ENCODE measurements at regions of chr5 and their contacts with region 1.

Region 1: DNA sequence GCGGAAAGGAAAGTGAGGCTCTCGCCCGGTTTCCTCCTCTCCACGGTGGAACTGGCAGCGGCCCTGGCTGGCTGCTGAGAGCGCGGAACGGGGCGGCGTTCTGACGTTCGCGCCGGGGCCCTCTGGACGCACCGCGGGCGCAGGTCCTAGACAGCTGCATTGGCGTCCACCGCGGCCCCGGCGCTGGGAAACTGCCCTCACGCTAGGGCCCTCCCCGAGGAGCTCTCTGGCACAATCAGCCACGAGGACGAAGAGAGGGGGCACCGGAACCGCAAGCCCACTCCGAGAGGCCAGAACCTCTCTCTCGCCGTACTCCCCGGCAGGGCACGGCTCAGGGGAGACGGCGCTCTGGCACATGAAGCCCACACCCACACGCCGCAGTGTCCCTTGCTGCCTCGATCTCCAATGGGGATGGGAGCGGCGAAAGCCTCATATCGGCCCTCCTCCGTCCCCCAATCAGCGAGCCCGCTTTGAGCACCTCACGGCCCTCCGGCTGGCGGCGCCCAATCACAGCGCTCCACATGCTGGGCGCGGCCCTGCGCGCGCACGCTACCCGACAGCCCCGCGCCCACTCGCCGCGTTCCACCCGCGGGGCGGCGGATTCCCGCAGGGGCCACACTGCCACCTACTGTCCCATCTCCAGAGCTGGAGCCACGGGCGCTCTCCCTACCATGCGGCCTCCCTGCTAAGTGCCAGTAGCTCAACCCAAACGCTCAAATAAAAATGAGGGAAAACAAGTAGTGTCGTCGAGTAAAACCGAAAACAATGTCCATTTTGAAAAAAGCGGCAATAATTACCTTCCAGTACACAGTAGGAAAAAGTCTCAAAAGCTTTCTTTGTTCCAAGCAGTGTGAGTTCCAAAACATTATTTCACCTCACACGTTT is 11.8 kb downstream of the MRPS27 start:
- DNase-seq: peak; percentile 98
- ATAC-seq: peak; percentile 93
- H3K4me3 ChIP-seq: peak overlapping the region; percentile 77 to 93 (median 86)
- H3K4me3 Mint-ChIP-seq: peak overlapping the region; percentile 96
- H3K27ac ChIP-seq: peak overlapping the region; percentile 95 to 96
- H3K27ac Mint-ChIP-seq: peak overlapping the region; percentile 99
- H3K4me1 ChIP-seq: peaks cover 12 to 29% of the 10 kb centered on the region in 2 donors
- H3K4me1 Mint-ChIP-seq: peaks cover 38% of the 10 kb centered on the region
- H3K27me3 ChIP-seq: no peaks in the 10 kb centered on the region
- H3K27me3 Mint-ChIP-seq: no peaks in the 10 kb centered on the region
- CTCF ChIP-seq: peak; percentile 89

Region 2: GRCh38 chr5:71586941-71587765 is 721.1 kb before region 1 on chr5 and contains the start of gene MCCC2:
- CTCF ChIA-PET with region 1: no interaction called
- POLR2A ChIA-PET with region 1: no interaction called
- intact Hi-C with region 1: loop called (anchors 5 kb)
- DNase-seq: peak; percentile 97
- ATAC-seq: peak; percentile 97
- H3K4me3 ChIP-seq: peak within 1 kb of the TSS; percentile 72 to 95 (median 92)
- H3K4me3 Mint-ChIP-seq: peak within 1 kb of the TSS; percentile 97
- H3K27ac ChIP-seq: peak within 1 kb of the TSS; percentile 83 to 97
- H3K27ac Mint-ChIP-seq: peak within 1 kb of the TSS; percentile 99
- H3K4me1 ChIP-seq: peaks cover 27 to 32% of the 10 kb centered on the region in 2 donors
- H3K4me1 Mint-ChIP-seq: peaks cover 39% of the 10 kb centered on the region
- H3K27me3 ChIP-seq: no peaks in the 10 kb centered on the region
- H3K27me3 Mint-ChIP-seq: no peaks in the 10 kb centered on the region
- CTCF ChIP-seq: no peak
- total RNA-seq, gene MCCC2: 47.2 and 49.7 TPM in 2 replicates

Region 3: GRCh38 chr5:72138943-72139521 is 169.2 kb before region 1 on chr5:
- CTCF ChIA-PET with region 1: interaction called, 63 read pairs
- POLR2A ChIA-PET with region 1: no interaction called
- intact Hi-C with region 1: loop called (anchors 1 kb)
- DNase-seq: no peak
- ATAC-seq: no peak
- H3K4me3 ChIP-seq: no peak overlapping the region
- H3K4me3 Mint-ChIP-seq: no peak overlapping the region
- H3K27ac ChIP-seq: no peak overlapping the region
- H3K27ac Mint-ChIP-seq: no peak overlapping the region
- H3K4me1 ChIP-seq: no peaks in the 10 kb centered on the region
- H3K4me1 Mint-ChIP-seq: no peaks in the 10 kb centered on the region
- H3K27me3 ChIP-seq: peaks cover 0 to 2% (median 0%) of the 10 kb centered on the region in 4 experiments
- H3K27me3 Mint-ChIP-seq: peaks cover 31% of the 10 kb centered on the region
- CTCF ChIP-seq: no peak

Region 4: GRCh38 chr5:72296256-72296655 is 12.0 kb before region 1 on chr5:
- CTCF ChIA-PET with region 1: interaction called, 21 read pairs
- POLR2A ChIA-PET with region 1: interaction called, 9 read pairs
- intact Hi-C with region 1: loop called (anchors 1 kb)
- DNase-seq: no peak
- ATAC-seq: no peak
- H3K4me3 ChIP-seq: no peak overlapping the region
- H3K4me3 Mint-ChIP-seq: peak overlapping the region; percentile 54
- H3K27ac ChIP-seq: peak overlapping the region in 1 of 2 donors; percentile 40
- H3K27ac Mint-ChIP-seq: peak overlapping the region; percentile 64
- H3K4me1 ChIP-seq: peaks cover 50 to 74% of the 10 kb centered on the region in 2 donors
- H3K4me1 Mint-ChIP-seq: peaks cover 79% of the 10 kb centered on the region
- H3K27me3 ChIP-seq: no peaks in the 10 kb centered on the region
- H3K27me3 Mint-ChIP-seq: no peaks in the 10 kb centered on the region
- CTCF ChIP-seq: no peak

Region 5: DNA sequence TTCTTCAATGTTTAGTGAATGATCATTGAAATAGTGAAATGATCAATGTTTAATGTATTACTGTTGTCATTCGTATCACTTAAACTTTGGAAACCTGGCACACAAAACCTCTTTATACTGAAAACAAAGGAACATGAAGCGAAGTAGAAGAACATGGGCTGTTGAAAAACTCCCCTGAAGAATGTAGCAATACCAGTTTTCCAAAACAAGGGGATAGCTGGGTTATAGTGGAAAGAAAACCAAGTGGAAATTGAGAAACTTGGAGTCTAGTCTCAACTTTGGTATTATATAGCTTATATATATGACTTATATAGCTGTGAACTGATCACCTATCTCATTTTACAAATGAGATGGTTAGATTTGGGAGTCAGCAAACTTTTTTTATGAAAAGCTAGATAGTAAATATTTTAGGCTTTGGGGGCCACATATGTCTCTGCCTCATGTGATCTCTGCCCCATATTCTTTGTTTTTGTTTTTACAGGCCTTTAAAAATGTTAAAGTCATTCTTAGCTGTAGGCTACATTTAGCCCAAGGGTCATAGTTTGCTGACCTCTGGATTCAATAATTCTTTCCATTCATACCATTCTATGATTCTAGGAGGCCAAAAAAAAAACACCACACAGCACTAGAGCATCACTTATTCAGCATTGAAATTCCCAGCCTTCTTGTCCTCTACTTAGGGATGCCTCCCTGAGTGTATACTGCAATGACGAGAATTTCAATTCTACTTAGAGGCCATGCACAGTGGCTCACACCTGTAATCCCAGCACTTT is 28.8 kb after region 1 on chr5:
- CTCF ChIA-PET with region 1: no interaction called
- POLR2A ChIA-PET with region 1: no interaction called
- intact Hi-C with region 1: no loop called
- DNase-seq: no peak
- ATAC-seq: no peak
- H3K4me3 ChIP-seq: no peak overlapping the region
- H3K4me3 Mint-ChIP-seq: no peak overlapping the region
- H3K27ac ChIP-seq: no peak overlapping the region
- H3K27ac Mint-ChIP-seq: no peak overlapping the region
- H3K4me1 ChIP-seq: no peaks in the 10 kb centered on the region
- H3K4me1 Mint-ChIP-seq: no peaks in the 10 kb centered on the region
- H3K27me3 ChIP-seq: no peaks in the 10 kb centered on the region
- H3K27me3 Mint-ChIP-seq: no peaks in the 10 kb centered on the region
- CTCF ChIP-seq: no peak